Activated CD4-positive, alpha-beta T cell treated with anti-CD3 and anti-CD28 coated beads, Interleukin-2, amount 10 ng/mL, durations not matched to agents 7 days and 5 days (primary cell): ENCODE measurements at regions of chr3 and their contacts with region 1.

Region 1: DNA sequence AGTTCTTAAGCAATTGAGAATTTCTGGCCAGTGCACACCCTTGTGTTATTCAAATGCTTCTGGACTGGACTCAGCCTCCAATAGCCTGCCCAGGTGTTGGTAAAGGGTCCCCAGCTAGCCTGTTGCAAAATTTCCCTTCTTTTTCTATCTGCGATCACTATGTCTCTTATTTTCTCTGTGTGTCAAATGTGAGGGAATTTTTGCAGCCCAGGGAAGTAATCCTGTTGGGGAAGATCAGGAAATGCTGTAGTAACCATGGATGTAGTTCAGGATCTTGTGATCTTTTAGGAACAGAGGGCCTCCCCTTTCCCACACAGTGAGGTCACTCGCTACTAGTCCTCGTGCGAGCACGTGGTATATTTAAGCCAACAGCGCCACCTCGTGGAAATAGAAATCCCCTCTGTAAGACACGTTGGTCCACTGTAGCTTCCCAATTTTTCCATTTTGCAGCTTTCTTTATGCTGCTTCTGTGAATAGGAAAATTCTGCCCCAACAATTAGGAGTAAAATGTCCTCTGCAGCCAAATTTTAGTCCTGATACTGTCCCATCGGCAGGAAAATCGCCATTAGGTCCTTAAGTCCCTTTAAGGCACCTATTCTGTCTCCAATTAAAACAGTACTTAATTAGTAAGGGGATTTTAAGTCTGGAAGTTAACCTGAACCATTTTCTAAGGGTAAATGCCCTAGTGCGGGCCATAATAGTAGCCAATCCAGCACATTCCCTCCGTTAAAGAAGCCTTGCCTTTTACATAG is 4.0 kb upstream of the SMCO1 start:
- DNase-seq: peak; percentile 73
- H3K4me3 Mint-ChIP-seq: no peak overlapping the region
- H3K27ac Mint-ChIP-seq: no peak overlapping the region
- H3K4me1 Mint-ChIP-seq: no peaks in the 10 kb centered on the region
- H3K27me3 Mint-ChIP-seq: peaks cover 3% of the 10 kb centered on the region

Region 2: GRCh38 chr3:196268270-196269163 is 250.6 kb before region 1 on chr3:
- CTCF ChIA-PET with region 1: no interaction called
- POLR2A ChIA-PET with region 1: interaction called, 12 read pairs
- DNase-seq: no peak
- H3K4me3 Mint-ChIP-seq: no peak overlapping the region
- H3K27ac Mint-ChIP-seq: peak overlapping the region; percentile 72
- H3K4me1 Mint-ChIP-seq: peaks cover 32% of the 10 kb centered on the region
- H3K27me3 Mint-ChIP-seq: no peaks in the 10 kb centered on the region

Region 3: DNA sequence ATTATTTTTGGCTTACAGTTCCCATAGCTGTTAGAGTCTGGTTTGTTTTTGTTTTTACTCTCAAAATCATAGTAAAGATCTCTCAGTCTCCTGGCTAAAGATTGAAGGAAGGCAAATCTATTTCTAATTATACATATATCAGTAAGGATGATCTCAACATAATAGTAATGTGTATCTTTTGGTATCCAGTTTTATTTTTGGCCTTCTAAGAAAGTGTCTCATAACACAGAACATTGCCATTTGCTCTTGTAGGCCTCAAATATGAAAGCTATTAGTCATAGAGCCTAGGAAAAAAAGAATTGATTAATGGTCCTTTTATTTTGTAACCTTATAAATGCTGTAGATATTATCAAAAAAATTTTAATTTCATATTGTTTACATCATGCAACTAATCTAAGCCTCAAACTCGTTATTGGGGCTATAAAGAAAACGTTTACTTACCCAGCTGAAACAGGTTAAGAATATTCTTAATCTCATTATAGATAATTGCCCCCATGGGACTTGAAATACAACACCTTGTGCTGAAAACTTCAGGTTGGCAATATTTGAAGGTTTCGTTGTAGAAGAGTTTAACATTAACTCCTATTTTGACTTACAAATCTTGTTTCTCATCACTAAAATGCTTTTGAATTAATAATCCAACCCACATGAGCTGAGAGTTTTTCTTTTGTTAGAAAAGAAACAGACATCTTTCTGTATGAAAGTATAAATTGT is 66.1 kb after region 1 on chr3:
- CTCF ChIA-PET with region 1: no interaction called
- POLR2A ChIA-PET with region 1: no interaction called
- DNase-seq: no peak
- H3K4me3 Mint-ChIP-seq: no peak overlapping the region
- H3K27ac Mint-ChIP-seq: no peak overlapping the region
- H3K4me1 Mint-ChIP-seq: peaks cover 5% of the 10 kb centered on the region
- H3K27me3 Mint-ChIP-seq: no peaks in the 10 kb centered on the region